ENCODE measurements at regions of chr1 and their contacts with region 1.

Region 1: DNA sequence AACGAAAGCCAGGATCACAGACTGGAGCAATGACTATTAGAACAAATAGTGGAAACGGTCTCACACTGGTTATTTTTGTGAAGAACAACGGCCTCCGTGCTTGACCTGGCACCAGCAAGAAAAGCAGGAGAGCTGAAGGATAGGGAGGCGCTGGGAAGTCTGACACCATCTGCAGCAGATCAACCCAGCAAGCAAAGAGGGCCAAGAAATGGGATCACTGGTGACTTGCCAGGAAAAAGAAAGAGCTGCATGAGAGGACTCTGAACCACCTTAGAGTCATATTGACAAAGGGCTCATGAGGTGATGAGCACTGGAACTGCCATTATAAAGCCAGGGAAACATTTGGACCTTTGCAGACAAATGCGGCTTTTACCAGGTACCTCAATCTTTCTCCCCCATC is 25.0 kb downstream of the MTOR start:
- DNase-seq: no peak
- H3K4me3 ChIP-seq: no peak overlapping the region
- H3K27ac ChIP-seq: peak overlapping the region in 1 of 5 donors; percentile 21
- H3K4me1 ChIP-seq: no peaks in the 10 kb centered on the region
- H3K27me3 ChIP-seq: no peaks in the 10 kb centered on the region
- CTCF ChIP-seq: no peak
- POLR2A ChIP-seq: no peak

Region 2: GRCh38 chr1:11126569-11126968 is 110.8 kb before region 1 on chr1:
- intact Hi-C with region 1: loop called in 1 of 2 experiments (anchors 10 kb)
- DNase-seq: no peak
- H3K4me3 ChIP-seq: no peak overlapping the region
- H3K27ac ChIP-seq: no peak overlapping the region
- H3K4me1 ChIP-seq: peaks cover 0 to 2% of the 10 kb centered on the region in 2 donors
- H3K27me3 ChIP-seq: no peaks in the 10 kb centered on the region
- CTCF ChIP-seq: no peak
- POLR2A ChIP-seq: no peak

Region 3: GRCh38 chr1:11466416-11466815 is 229.1 kb after region 1 on chr1:
- intact Hi-C with region 1: no loop called
- DNase-seq: no peak
- H3K4me3 ChIP-seq: no peak overlapping the region
- H3K27ac ChIP-seq: no peak overlapping the region
- H3K4me1 ChIP-seq: no peaks in the 10 kb centered on the region
- H3K27me3 ChIP-seq: no peaks in the 10 kb centered on the region
- CTCF ChIP-seq: no peak
- POLR2A ChIP-seq: no peak